ENCODE measurements at regions of chr19 and their contacts with region 1.

Region 1: GRCh38 chr19:58519355-58520256 is at the start of gene ZBTB45:
- DNase-seq: peak; percentile 86
- CTCF ChIP-seq: peak; percentile 82

Region 2: GRCh38 chr19:58328999-58329398 is 190.6 kb before region 1 on chr19:
- CTCF ChIA-PET with region 1: interaction called, 10 read pairs
- POLR2A ChIA-PET with region 1: interaction called, 4 read pairs
- DNase-seq: no peak
- CTCF ChIP-seq: peak; percentile 42

Region 3: GRCh38 chr19:58362272-58362994 is 157.2 kb before region 1 on chr19 and contains the start of gene ZNF497:
- CTCF ChIA-PET with region 1: interaction called, 11 read pairs
- POLR2A ChIA-PET with region 1: no interaction called
- DNase-seq: peak; percentile 100
- CTCF ChIP-seq: no peak

Region 4: GRCh38 chr19:58429745-58430144 is 89.9 kb before region 1 on chr19:
- CTCF ChIA-PET with region 1: no interaction called
- POLR2A ChIA-PET with region 1: no interaction called
- DNase-seq: no peak
- CTCF ChIP-seq: no peak

Region 5: GRCh38 chr19:58531034-58531840 is 11.6 kb after region 1 on chr19:
- CTCF ChIA-PET with region 1: interaction called, 30 read pairs
- POLR2A ChIA-PET with region 1: no interaction called
- DNase-seq: no peak
- CTCF ChIP-seq: no peak

Region 6: DNA sequence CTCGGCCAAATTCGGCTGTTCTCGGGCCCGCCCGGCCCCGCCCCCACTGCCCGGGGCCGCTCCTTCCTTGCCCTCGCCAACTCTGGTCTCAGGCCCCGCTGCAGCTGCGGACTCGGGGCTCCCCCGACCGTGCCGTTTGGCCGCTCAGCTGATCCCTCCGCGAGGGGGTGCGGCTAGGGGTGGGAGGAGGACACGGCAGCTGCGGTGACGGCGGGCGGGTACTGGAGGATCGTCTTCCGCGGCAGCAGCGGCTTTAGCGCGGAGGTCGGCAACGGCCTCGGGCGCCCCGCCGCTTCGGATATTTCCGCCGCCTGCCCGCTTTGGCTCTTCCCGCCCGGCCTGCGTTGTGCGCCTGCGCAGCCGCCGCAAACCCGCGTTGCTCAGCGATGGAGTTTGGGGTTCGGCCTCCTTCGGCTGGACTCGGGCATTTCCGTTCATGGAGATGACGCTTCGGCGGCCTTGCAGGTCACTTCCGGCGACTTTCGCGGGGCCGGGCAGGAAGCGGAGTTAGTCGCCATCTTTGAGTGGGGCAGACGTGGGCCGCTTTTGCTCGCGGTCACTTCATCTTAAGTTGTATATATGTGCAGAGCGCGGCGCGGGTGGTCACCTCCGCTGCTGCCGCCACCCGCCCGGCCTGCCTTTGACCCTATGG is 39.1 kb after region 1 on chr19:
- CTCF ChIA-PET with region 1: interaction called, 30 read pairs
- POLR2A ChIA-PET with region 1: interaction called, 8 read pairs
- DNase-seq: peak; percentile 95
- CTCF ChIP-seq: peak; percentile 6

Region 7: GRCh38 chr19:58581227-58582151 is 61.9 kb after region 1 on chr19:
- CTCF ChIA-PET with region 1: interaction called, 60 read pairs
- POLR2A ChIA-PET with region 1: interaction called, 4 read pairs
- DNase-seq: peak; percentile 90
- CTCF ChIP-seq: peak; percentile 100